GM12878 (cell line): ENCODE measurements at regions of chr10 and their contacts with region 1.

Region 1: DNA sequence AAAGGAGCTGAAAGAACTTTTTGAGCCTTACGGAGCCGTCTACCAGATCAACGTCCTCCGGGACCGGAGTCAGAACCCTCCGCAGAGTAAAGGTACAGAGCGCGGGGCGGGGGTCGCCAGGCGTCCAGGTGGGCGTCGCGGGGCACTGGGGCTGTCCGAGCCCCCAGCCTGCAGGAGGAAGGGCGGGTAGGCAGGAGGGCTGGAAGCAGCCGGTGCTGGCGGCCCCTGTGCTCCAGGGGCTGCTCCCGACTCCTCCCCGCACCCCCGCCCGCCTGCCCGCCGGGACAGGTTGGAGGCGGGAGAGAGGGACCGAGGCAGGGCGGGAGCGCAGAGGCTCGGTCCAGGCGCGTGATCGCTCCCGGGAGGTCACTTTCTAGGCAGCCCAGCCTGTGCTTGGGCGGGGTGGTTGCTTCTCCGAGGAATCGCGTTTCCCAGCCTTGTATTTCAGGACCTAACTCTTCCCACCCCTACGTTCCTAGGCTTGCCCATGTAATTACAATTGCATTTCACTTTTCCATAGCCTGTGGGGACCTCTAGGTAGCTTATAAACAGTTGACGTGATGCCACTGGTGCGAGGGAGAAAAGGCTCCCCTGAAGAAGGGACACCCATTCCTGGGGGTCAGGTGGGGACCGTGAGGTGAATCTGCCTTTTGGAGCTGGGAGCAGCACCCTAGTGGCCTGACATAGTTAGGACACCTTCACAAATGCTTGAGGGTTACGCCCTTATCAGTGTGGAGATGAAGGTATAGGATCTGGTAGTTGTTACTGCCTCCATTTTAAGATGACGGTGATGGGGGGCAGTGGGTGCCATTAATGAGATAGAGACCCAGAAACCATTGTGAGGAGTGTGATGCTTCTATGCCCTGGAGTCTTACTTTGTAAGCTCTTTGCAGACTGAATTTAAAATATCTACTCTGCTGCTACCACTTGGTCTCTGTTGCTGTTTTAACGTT is 148.2 kb downstream of the CELF2 start:
- DNase-seq: no peak
- ATAC-seq: peak; percentile 69
- H3K4me3 ChIP-seq: peak overlapping the region; percentile 96
- H3K27ac ChIP-seq: peak overlapping the region; percentile 95
- H3K4me1 ChIP-seq: peaks cover 21% of the 10 kb centered on the region
- H3K27me3 ChIP-seq: no peaks in the 10 kb centered on the region
- CTCF ChIP-seq: peak; percentile 66 to 89 (median 72)
- EP300 ChIP-seq: no peak
- POLR2A ChIP-seq: peak; percentile 54; the same call in 1 of the 2 replicates
- RAD21 ChIP-seq: peak; percentile 68

Region 2: GRCh38 chr10:11086177-11086865 is 79.5 kb before region 1 on chr10:
- CTCF ChIA-PET with region 1: no interaction called
- POLR2A ChIA-PET with region 1: no interaction called
- RAD21 ChIA-PET with region 1: no interaction called
- SMC1A ChIA-PET with region 1: no interaction called
- in situ Hi-C with region 1: no loop called
- intact Hi-C with region 1: no loop called
- DNase-seq: no peak
- ATAC-seq: no peak
- H3K4me3 ChIP-seq: no peak overlapping the region
- H3K27ac ChIP-seq: no peak overlapping the region
- H3K4me1 ChIP-seq: peaks cover 4% of the 10 kb centered on the region; the same call in 1 of the 2 replicates
- H3K27me3 ChIP-seq: no peaks in the 10 kb centered on the region
- CTCF ChIP-seq: no peak
- EP300 ChIP-seq: no peak
- POLR2A ChIP-seq: no peak
- RAD21 ChIP-seq: no peak

Region 3: DNA sequence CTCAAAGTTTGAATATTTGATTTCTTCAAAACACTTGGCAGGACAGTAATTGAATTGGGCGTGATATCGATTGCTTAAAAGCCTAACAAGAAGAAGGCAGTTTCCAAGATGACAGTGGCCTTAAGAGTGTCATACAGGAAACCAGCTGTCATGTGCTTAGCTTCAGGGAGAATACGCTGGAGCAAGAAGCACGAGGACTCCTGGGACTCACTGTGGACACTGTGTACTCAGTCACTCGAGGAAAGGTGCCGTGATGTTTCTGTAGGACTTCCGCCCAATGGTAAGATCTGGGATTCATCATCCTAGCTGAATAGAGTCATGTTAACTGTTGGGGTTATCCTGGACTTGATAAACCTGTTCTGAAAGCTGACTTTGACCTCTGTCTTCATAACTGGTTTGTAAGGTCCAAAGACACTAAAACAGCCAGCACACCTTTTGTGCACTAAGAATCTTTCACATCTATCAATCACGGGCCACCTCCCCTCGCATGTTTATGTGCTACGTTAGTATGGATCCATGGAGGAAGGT is 34.7 kb before region 1 on chr10:
- CTCF ChIA-PET with region 1: no interaction called
- POLR2A ChIA-PET with region 1: no interaction called
- RAD21 ChIA-PET with region 1: no interaction called
- SMC1A ChIA-PET with region 1: no interaction called
- in situ Hi-C with region 1: no loop called
- intact Hi-C with region 1: no loop called
- DNase-seq: no peak
- ATAC-seq: no peak
- H3K4me3 ChIP-seq: no peak overlapping the region
- H3K27ac ChIP-seq: no peak overlapping the region
- H3K4me1 ChIP-seq: no peaks in the 10 kb centered on the region
- H3K27me3 ChIP-seq: no peaks in the 10 kb centered on the region
- CTCF ChIP-seq: no peak
- EP300 ChIP-seq: no peak
- POLR2A ChIP-seq: no peak
- RAD21 ChIP-seq: no peak

Region 4: GRCh38 chr10:11145495-11145855 is 20.4 kb before region 1 on chr10:
- CTCF ChIA-PET with region 1: interaction called, 19 read pairs
- POLR2A ChIA-PET with region 1: interaction called, 15 read pairs
- RAD21 ChIA-PET with region 1: interaction called, 57 read pairs
- SMC1A ChIA-PET with region 1: interaction called, 99 read pairs
- in situ Hi-C with region 1: no loop called
- intact Hi-C with region 1: loop called (anchors 1 kb)
- DNase-seq: no peak
- ATAC-seq: peak; percentile 92
- H3K4me3 ChIP-seq: peak overlapping the region; percentile 25; the same call in 1 of the 2 replicates
- H3K27ac ChIP-seq: peak overlapping the region; percentile 68
- H3K4me1 ChIP-seq: peaks cover 16% of the 10 kb centered on the region
- H3K27me3 ChIP-seq: no peaks in the 10 kb centered on the region
- CTCF ChIP-seq: no peak
- EP300 ChIP-seq: no peak
- POLR2A ChIP-seq: peak; percentile 25; the same call in 1 of the 2 replicates
- RAD21 ChIP-seq: no peak

Region 5: DNA sequence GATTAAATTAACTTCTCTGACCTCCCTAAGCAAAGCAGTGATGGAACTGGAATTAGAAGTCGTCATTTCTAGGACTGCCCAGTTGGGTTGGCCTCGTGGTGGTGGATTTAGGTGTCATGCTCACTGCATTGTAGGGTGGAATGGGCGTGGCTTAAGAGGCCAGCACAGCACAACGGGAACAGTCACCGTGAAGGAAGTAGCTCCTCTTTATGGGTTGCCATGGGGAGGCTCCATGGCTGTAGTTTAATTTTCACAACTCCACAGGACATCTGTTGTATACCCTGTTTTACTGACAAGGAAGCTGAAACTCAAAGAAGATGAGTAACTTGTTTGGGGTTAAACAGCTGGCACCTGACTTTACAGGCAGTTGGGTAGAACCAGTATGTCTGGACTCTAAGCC is 60.1 kb after region 1 on chr10:
- CTCF ChIA-PET with region 1: interaction called, 4 read pairs
- POLR2A ChIA-PET with region 1: interaction called, 4 read pairs
- RAD21 ChIA-PET with region 1: interaction called, 15 read pairs
- SMC1A ChIA-PET with region 1: interaction called, 17 read pairs
- in situ Hi-C with region 1: no loop called
- intact Hi-C with region 1: no loop called
- DNase-seq: no peak
- ATAC-seq: peak; percentile 79
- H3K4me3 ChIP-seq: 0 out of 2 replicates have a peak overlapping the region, but pooled peaks have one; percentile 8
- H3K27ac ChIP-seq: peak overlapping the region; percentile 77
- H3K4me1 ChIP-seq: peaks cover 62% of the 10 kb centered on the region
- H3K27me3 ChIP-seq: no peaks in the 10 kb centered on the region
- CTCF ChIP-seq: no peak
- EP300 ChIP-seq: 0 out of 4 replicates have a peak, but pooled peaks of 1 of the 2 experiments have one; percentile 23
- POLR2A ChIP-seq: no peak
- RAD21 ChIP-seq: no peak

Region 6: DNA sequence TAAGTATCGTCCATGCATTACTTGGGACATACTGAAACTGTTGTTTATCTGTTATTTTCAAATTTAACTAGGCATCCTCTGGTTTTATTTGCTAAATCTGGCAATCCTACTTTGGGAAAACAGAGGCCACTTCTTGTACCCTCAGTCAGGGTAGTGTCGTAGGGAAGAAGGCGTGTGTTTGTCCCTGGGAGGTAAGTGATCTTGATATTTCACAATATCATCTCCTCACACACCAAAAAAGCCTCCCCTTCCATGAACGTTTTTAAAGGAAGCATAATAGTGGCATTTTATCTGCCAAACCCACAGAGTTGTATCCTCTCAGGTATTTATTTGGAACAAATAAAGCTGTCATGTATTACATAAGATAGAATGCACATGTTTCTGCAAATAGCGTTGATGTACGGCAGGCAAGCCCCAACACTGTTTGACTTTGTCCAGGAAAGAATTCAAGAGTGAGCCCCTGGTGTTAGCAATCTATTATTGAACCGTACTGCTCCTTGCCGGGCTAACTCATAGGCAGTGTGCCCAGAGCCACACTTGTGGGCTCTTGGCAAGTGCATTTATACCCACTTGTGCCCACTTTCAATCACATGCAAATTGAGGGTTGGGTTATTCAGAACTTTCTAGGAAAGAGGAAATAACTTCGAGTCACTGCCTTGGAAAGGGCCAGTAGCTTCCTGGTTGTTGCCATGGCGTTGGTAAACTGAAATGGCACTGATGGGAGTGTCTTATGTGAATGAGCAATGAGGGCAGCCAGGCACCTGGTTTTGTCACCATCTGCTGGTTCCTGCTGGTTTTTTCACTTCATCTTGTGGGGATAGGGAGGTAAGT is 179.6 kb after region 1 on chr10:
- CTCF ChIA-PET with region 1: no interaction called
- POLR2A ChIA-PET with region 1: no interaction called
- RAD21 ChIA-PET with region 1: no interaction called
- SMC1A ChIA-PET with region 1: no interaction called
- in situ Hi-C with region 1: no loop called
- intact Hi-C with region 1: loop called (anchors 5 kb)
- DNase-seq: peak; percentile 27
- ATAC-seq: peak; percentile 82
- H3K4me3 ChIP-seq: no peak overlapping the region
- H3K27ac ChIP-seq: no peak overlapping the region
- H3K4me1 ChIP-seq: no peaks in the 10 kb centered on the region
- H3K27me3 ChIP-seq: no peaks in the 10 kb centered on the region; a peak in 1 of 4 replicates
- CTCF ChIP-seq: peak; percentile 25 to 33 (median 29); a peak in 4 of 6 replicates
- EP300 ChIP-seq: no peak
- POLR2A ChIP-seq: no peak
- RAD21 ChIP-seq: peak; percentile 45